ENCODE measurements at regions of chr22 and their contacts with region 1.

Region 1: DNA sequence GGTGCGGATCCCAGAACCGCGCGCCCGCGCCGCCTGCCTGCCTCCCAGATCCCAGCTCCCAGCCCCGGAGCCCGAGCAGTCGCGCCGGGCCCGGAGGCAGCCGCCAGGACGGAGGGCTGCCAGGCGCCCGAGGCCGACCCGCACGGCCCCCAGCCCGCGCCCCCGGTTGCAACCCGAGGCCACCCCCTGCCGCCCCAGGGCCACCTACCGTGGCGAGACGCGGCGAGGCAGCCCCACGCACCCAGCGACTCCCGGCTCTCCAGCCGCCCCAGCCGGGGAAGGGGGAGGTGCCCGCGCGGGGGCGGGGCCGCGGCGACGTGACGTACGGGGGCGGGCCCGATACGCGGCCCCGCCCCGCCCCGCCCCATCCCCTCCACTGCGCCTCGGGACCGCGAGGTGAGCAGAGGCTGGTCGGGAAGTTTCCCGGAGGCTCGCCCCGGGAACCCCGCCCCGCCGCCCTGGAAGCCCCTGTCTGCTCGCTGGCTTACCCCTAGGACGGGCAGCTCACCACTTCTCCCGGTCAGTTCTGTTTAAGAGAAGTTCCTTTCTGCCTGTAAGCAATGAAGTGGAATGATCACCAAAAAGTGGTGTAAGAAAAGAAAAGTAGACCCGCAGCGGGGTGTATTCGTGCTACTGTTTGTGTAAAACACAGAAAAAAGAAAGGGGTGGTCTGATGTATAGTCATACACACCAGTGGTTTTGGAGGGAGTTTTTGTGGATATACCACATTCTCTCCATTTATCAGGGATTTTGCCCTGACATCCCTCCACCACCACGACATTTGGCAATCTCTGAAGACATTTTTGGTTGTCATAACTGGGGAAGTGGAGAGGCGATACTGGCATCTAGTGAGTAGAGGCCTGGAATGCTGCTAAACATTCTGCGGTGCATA is at the start of gene TPST2:
- DNase-seq: peak; percentile 76
- H3K4me3 ChIP-seq: peak within 1 kb of the TSS; percentile 79 to 93 (median 82)
- H3K27ac ChIP-seq: peak within 1 kb of the TSS; percentile 60
- H3K4me1 ChIP-seq: peaks cover 36% of the 10 kb centered on the region
- H3K27me3 ChIP-seq: peaks cover 2 to 7% of the 10 kb centered on the region in 2 experiments
- CTCF ChIP-seq: no peak
- POLR2A ChIP-seq: peak; percentile 60
- total RNA-seq, gene TPST2: 48.4 and 49.4 TPM in 2 replicates

Region 2: GRCh38 chr22:26511857-26512793 is 78.0 kb before region 1 on chr22 and contains the start of gene TFIP11:
- CTCF ChIA-PET with region 1: no interaction called
- POLR2A ChIA-PET with region 1: no interaction called
- dilution Hi-C with region 1: no loop called
- intact Hi-C with region 1: loop called (anchors 2 kb)
- DNase-seq: peak; percentile 95
- H3K4me3 ChIP-seq: peak within 1 kb of the TSS; percentile 16 to 95 (median 88)
- H3K27ac ChIP-seq: peak within 1 kb of the TSS; percentile 67
- H3K4me1 ChIP-seq: peaks cover 16% of the 10 kb centered on the region
- H3K27me3 ChIP-seq: no peaks in the 10 kb centered on the region
- CTCF ChIP-seq: no peak
- POLR2A ChIP-seq: peak; percentile 55
- total RNA-seq, gene TFIP11: 49.8 and 54.9 TPM in 2 replicates

Region 3: GRCh38 chr22:26553056-26553752 is 36.9 kb before region 1 on chr22:
- CTCF ChIA-PET with region 1: interaction called, 3 read pairs
- POLR2A ChIA-PET with region 1: no interaction called
- dilution Hi-C with region 1: no loop called
- intact Hi-C with region 1: loop called (anchors 2 kb)
- DNase-seq: peak; percentile 72
- H3K4me3 ChIP-seq: no peak overlapping the region
- H3K27ac ChIP-seq: peak overlapping the region; percentile 77
- H3K4me1 ChIP-seq: peaks cover 24% of the 10 kb centered on the region
- H3K27me3 ChIP-seq: no peaks in the 10 kb centered on the region
- CTCF ChIP-seq: no peak
- POLR2A ChIP-seq: no peak

Region 4: GRCh38 chr22:26642465-26643417 is 52.6 kb after region 1 on chr22:
- CTCF ChIA-PET with region 1: no interaction called
- POLR2A ChIA-PET with region 1: no interaction called
- dilution Hi-C with region 1: no loop called
- intact Hi-C with region 1: no loop called
- DNase-seq: no peak
- H3K4me3 ChIP-seq: no peak overlapping the region
- H3K27ac ChIP-seq: no peak overlapping the region
- H3K4me1 ChIP-seq: peaks cover 7% of the 10 kb centered on the region
- H3K27me3 ChIP-seq: peaks cover 5 to 8% of the 10 kb centered on the region in 2 experiments
- CTCF ChIP-seq: peak in 1 of 2 donors; percentile 7
- POLR2A ChIP-seq: no peak

Measured in endothelial cell of umbilical vein (primary cell).